Activated naive CD8-positive, alpha-beta T cell treated with anti-CD3 and anti-CD28 coated beads, Interleukin-2, amount 10 ng/mL, durations not matched to agents 7 days and 5 days (primary cell): ENCODE measurements at regions of chr11 and their contacts with region 1.

Region 1: DNA sequence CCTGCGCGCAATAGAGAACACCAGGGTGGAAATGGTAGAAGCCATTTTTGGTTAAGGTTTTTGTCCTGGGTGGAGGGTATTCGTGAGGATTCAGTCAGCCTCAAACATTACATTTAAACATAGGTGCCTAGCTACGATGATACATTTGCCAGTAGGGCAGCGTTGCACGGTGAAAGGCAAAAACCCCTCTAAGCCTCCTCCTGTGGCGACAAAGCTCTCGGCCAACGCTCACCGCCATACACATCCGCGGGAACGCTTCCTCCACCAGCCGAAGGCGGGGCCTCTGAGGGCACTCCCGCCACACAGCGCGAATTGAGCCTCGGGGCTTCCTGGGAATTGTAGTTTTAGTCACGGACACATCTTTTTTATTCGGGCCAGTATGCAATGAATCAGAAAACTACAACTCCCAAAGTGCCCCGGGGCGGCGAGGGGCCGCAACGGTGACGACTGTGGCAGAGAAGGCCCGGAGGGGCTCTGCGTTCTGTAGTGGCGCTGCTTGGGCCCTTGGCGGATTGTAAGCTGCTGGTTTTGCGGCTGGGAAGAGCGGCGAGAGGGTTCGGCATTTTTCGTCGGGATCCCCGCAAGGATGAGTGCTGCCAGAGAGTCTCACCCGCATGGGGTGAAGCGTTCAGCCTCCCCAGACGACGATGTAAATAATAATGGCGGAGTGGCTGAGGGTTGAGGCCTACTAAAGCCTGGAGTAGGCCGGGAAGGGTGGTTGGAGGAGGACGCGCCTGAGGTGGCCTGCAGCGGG is at the start of gene C11orf58:
- DNase-seq: peak; percentile 90
- ATAC-seq: peak; percentile 96
- H3K4me3 Mint-ChIP-seq: peak within 1 kb of the TSS; percentile 78
- H3K27ac Mint-ChIP-seq: peak within 1 kb of the TSS; percentile 82
- H3K4me1 Mint-ChIP-seq: peaks cover 17% of the 10 kb centered on the region
- H3K27me3 Mint-ChIP-seq: no peaks in the 10 kb centered on the region
- total RNA-seq, gene C11orf58: 120 to 121 TPM

Region 2: GRCh38 chr11:16632295-16633200 is 105.8 kb before region 1 on chr11:
- POLR2A ChIA-PET with region 1: no interaction called
- DNase-seq: no peak
- ATAC-seq: no peak
- H3K4me3 Mint-ChIP-seq: no peak overlapping the region
- H3K27ac Mint-ChIP-seq: no peak overlapping the region
- H3K4me1 Mint-ChIP-seq: no peaks in the 10 kb centered on the region
- H3K27me3 Mint-ChIP-seq: no peaks in the 10 kb centered on the region

Region 3: DNA sequence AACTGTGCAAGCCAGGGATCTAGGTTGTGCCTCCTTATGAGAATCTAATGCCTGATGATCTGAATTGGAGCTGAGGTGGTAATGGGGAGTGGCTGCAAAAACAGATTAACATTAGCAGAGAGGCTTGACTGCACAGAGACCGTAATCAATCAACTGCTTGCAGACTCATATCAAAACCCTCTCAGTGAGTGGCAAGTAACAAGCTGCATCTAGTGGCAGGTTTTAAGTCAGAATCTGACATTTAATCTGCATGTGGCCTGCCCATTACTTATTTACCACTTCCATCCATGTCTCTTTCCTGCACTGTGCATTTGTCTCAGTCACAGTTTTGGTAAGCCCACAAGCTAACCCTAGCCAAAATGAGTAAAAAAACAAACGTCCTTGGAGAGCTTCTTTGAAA is 11.3 kb after region 1 on chr11:
- POLR2A ChIA-PET with region 1: interaction called, 15 read pairs
- DNase-seq: no peak
- ATAC-seq: no peak
- H3K4me3 Mint-ChIP-seq: no peak overlapping the region
- H3K27ac Mint-ChIP-seq: no peak overlapping the region
- H3K4me1 Mint-ChIP-seq: peaks cover 9% of the 10 kb centered on the region
- H3K27me3 Mint-ChIP-seq: no peaks in the 10 kb centered on the region